SK-N-SH (cell line): ENCODE measurements at regions of chr20 and their contacts with region 1.

Region 1: GRCh38 chr20:8853805-8854338 is 215.0 kb upstream of the PLCB4 start:
- DNase-seq: peak; percentile 61
- H3K4me3 ChIP-seq: peak overlapping the region in 1 of 2 experiments; percentile 9; a peak in 1 of 4 replicates
- H3K27ac ChIP-seq: peak overlapping the region in 1 of 2 experiments; percentile 22; a peak in 1 of 4 replicates
- H3K4me1 ChIP-seq: peaks cover 3 to 11% of the 10 kb centered on the region in 2 experiments
- H3K27me3 ChIP-seq: no peaks in the 10 kb centered on the region
- CTCF ChIP-seq: peak; percentile 95
- EP300 ChIP-seq: no peak
- RAD21 ChIP-seq: peak; percentile 90

Region 2: GRCh38 chr20:8837396-8837795 is 16.5 kb before region 1 on chr20:
- CTCF ChIA-PET with region 1: interaction called, 21 read pairs
- POLR2A ChIA-PET with region 1: no interaction called
- DNase-seq: no peak
- H3K4me3 ChIP-seq: no peak overlapping the region
- H3K27ac ChIP-seq: no peak overlapping the region
- H3K4me1 ChIP-seq: no peaks in the 10 kb centered on the region
- H3K27me3 ChIP-seq: no peaks in the 10 kb centered on the region
- CTCF ChIP-seq: no peak
- EP300 ChIP-seq: no peak
- RAD21 ChIP-seq: no peak

Region 3: DNA sequence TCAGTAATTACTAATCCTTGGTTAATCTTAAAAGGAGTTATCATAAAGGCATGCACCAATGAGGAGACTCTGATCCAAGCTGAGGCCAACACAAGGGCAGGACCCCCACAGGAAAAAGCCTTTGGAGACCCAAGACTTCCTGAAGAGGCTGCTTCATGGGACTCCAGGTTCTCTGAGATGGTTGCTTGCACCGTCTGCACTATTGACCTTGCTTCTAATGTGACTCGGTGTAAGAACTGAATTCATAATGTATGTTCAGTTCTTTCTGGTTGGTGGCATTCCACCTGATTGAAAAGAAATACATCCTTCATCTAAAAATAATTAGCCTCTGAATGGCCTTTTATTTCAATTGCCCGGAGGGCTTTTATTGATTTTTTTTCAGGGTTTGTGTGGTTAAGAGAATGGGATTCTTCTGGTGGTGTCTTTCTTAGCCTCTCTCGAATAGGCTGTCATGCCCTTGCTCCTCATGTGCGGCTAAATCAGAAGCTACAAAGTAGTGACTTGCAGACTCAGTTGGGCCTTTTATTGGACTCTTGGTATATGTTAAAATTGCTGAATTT is 13.4 kb after region 1 on chr20:
- CTCF ChIA-PET with region 1: interaction called, 23 read pairs
- POLR2A ChIA-PET with region 1: no interaction called
- DNase-seq: no peak
- H3K4me3 ChIP-seq: no peak overlapping the region
- H3K27ac ChIP-seq: no peak overlapping the region
- H3K4me1 ChIP-seq: no peaks in the 10 kb centered on the region; a peak in 1 of 4 replicates
- H3K27me3 ChIP-seq: no peaks in the 10 kb centered on the region
- CTCF ChIP-seq: no peak
- EP300 ChIP-seq: no peak
- RAD21 ChIP-seq: no peak

Region 4: GRCh38 chr20:8909596-8909995 is 55.7 kb after region 1 on chr20:
- CTCF ChIA-PET with region 1: interaction called, 13 read pairs
- POLR2A ChIA-PET with region 1: no interaction called
- DNase-seq: no peak
- H3K4me3 ChIP-seq: no peak overlapping the region
- H3K27ac ChIP-seq: peak overlapping the region in 1 of 2 experiments; percentile 53; a peak in 1 of 4 replicates
- H3K4me1 ChIP-seq: no peaks in the 10 kb centered on the region
- H3K27me3 ChIP-seq: no peaks in the 10 kb centered on the region
- CTCF ChIP-seq: no peak
- EP300 ChIP-seq: no peak
- RAD21 ChIP-seq: no peak

Region 5: GRCh38 chr20:9353180-9353915 is 499.5 kb after region 1 on chr20:
- CTCF ChIA-PET with region 1: interaction called, 11 read pairs
- POLR2A ChIA-PET with region 1: no interaction called
- DNase-seq: no peak
- H3K4me3 ChIP-seq: no peak overlapping the region
- H3K27ac ChIP-seq: no peak overlapping the region
- H3K4me1 ChIP-seq: peaks cover 3 to 5% of the 10 kb centered on the region in 2 experiments; a peak in 3 of 4 replicates
- H3K27me3 ChIP-seq: no peaks in the 10 kb centered on the region
- CTCF ChIP-seq: no peak
- EP300 ChIP-seq: no peak
- RAD21 ChIP-seq: no peak; the same call in 1 of the 2 replicates

Region 6: DNA sequence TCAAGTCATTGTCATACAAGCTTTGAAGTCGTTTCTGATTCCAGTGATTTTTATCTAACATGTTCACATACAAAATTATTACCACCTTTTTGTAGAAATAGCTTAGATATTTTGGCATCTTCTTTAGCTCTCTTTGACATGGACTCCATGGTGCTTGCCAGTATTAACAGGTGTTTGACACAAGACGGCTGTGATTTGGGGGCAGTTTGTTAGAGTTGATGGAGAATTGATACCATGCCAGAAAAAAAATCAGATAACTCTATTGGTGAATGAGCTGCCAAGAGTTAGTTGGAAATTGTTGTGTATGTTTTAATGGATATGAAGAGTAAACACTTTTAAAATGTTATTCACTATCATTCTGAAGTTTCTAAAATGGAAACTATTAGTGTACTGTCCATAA is 513.9 kb after region 1 on chr20:
- CTCF ChIA-PET with region 1: interaction called, 13 read pairs
- POLR2A ChIA-PET with region 1: no interaction called
- DNase-seq: no peak
- H3K4me3 ChIP-seq: no peak overlapping the region
- H3K27ac ChIP-seq: no peak overlapping the region
- H3K4me1 ChIP-seq: no peaks in the 10 kb centered on the region; a peak in 1 of 4 replicates
- H3K27me3 ChIP-seq: no peaks in the 10 kb centered on the region
- CTCF ChIP-seq: no peak
- EP300 ChIP-seq: no peak
- RAD21 ChIP-seq: no peak